Posterior vena cava (tissue), 2 donors: ENCODE measurements at regions of chr20 and their contacts with region 1.

Region 1: GRCh38 chr20:8722276-8722928 is 346.5 kb upstream of the PLCB4 start:
- DNase-seq: no peak

Region 2: GRCh38 chr20:8043687-8044282 is 678.6 kb before region 1 on chr20:
- intact Hi-C with region 1: loop called in 1 of 2 experiments (anchors 10 kb)
- DNase-seq: no peak

Region 3: GRCh38 chr20:8050157-8050837 is 672.1 kb before region 1 on chr20:
- intact Hi-C with region 1: loop called (anchors 5 to 10 kb)
- DNase-seq: no peak

Region 4: DNA sequence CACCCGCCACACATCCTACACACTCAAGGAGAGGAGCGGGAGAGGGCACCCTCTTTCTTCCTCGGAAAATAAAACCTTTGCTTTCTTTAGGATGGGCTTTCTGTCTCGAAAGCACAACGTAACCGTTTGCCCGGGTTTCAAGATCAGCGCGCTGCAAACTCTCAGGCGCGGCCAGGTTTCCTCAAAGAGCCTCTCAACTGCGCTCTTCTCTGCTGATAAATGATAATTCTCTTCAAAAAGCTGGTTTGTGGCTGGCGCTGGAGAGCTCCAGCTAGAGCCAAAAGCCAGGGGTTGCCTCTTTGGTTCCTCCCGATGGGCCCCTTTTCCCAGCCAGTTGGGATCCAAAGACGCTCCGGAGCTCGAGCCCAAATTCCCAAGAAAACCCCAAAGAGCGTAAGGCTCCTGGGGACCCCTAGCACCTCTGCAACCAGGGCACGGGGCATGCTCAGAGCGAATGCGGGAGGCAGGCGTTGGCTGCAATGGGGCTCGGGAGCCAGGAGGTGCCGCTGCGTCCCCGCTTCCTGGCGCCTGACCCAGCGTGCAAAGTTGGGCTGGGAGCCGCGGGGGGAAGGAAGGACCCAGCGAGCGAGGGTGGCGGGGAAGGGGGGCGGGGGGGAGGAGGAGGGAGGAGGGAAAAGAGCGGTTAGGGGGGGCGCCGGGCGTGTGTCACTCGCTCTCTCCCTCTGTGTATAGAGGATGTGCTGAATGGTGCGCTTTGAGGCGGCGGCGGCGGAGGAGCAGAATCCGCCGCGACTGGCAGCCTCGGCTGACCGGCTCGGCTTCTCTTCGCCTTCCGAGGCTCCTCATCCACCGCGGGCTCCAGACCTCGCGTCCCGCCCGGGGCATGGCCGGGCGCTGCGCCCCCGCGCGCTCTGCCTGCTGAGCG is 590.6 kb before region 1 on chr20 and contains the start of gene PLCB1:
- intact Hi-C with region 1: loop called in 1 of 2 experiments (anchors 5 kb)
- DNase-seq: peak; percentile 96
- total RNA-seq, gene PLCB1: 16.9 to 20.8 TPM